Activated CD4-positive, alpha-beta T cell treated with anti-CD3 and anti-CD28 coated beads for 36 hours (primary cell): ENCODE measurements at regions of chr11 and their contacts with region 1.

Region 1: DNA sequence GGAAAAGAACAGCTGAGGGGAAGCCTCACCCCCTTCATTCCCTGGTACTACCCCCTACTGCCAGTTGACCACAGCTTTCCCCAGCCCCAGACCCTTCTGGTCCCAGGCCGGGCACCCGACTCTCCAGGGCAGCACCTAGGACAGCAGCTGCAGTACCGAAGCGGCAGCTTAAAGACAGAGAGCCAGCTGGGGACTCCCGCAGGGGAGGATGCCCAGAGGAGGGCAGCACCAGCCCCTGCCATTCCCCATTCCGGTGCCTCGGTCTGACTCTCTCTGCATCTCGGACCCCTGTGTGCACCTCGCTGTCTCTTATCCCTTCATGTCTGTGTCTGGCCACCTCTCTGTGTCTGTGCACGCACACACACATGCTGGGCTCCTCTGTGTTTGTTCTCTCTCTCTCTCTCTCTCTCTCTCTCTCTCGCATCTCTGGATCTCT is 9.4 kb downstream of the IGSF9B start:
- DNase-seq: peak; percentile 87
- ATAC-seq: peak; percentile 27
- H3K4me3 Mint-ChIP-seq: peak overlapping the region; percentile 65
- H3K27ac Mint-ChIP-seq: peak overlapping the region; percentile 85
- H3K4me1 Mint-ChIP-seq: peaks cover 75% of the 10 kb centered on the region
- H3K27me3 Mint-ChIP-seq: no peaks in the 10 kb centered on the region

Region 2: GRCh38 chr11:133726542-133726941 is 220.8 kb before region 1 on chr11:
- CTCF ChIA-PET with region 1: no interaction called
- POLR2A ChIA-PET with region 1: no interaction called
- intact Hi-C with region 1: no loop called
- DNase-seq: no peak
- ATAC-seq: no peak
- H3K4me3 Mint-ChIP-seq: no peak overlapping the region
- H3K27ac Mint-ChIP-seq: no peak overlapping the region
- H3K4me1 Mint-ChIP-seq: no peaks in the 10 kb centered on the region
- H3K27me3 Mint-ChIP-seq: no peaks in the 10 kb centered on the region

Region 3: GRCh38 chr11:133977067-133977677 is 29.8 kb after region 1 on chr11:
- CTCF ChIA-PET with region 1: no interaction called
- POLR2A ChIA-PET with region 1: no interaction called
- intact Hi-C with region 1: no loop called
- DNase-seq: no peak
- ATAC-seq: peak; percentile 65
- H3K4me3 Mint-ChIP-seq: no peak overlapping the region
- H3K27ac Mint-ChIP-seq: no peak overlapping the region
- H3K4me1 Mint-ChIP-seq: no peaks in the 10 kb centered on the region
- H3K27me3 Mint-ChIP-seq: peaks cover 8% of the 10 kb centered on the region

Region 4: DNA sequence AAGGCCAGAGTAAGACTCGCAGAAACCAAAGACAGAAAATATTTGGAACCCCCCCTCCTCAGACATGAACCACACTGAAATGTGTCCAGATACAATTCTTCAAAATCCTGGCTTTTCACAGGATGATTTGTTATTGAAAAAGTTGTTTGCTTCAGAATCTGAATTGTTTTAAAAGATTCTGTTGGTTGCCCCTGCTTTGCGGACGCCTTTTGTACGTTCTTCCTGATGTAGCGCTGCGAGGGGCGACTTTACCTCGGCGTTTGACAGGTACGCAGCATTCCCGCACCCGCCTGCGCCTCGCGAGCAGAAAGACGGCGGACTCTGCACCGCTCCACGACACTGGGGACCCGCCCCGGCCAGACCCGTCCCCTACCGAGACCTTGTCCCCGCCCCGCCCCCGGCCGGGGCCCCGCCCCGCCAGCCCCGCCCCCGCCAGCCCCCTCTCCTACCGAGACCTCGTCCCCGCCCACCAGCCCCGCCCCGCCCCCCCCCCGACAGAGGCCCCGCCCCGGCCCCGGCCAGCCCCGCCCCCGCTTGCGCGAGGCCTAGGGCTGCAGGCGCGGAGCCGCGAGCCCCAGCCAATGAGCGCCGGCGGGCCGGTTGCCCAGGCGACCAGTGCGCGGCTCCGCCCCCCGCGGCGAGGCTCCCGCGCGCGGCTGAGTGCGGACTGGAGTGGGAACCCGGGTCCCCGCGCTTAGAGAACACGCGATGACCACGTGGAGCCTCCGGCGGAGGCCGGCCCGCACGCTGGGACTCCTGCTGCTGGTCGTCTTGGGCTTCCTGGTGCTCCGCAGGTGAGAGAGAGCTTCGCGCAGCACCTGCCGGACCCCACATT is 384.2 kb after region 1 on chr11 and contains the start of gene GLB1L2:
- CTCF ChIA-PET with region 1: no interaction called
- POLR2A ChIA-PET with region 1: no interaction called
- intact Hi-C with region 1: loop called in 1 of 2 experiments (anchors 5 kb)
- DNase-seq: peak; percentile 86
- ATAC-seq: peak; percentile 99
- H3K4me3 Mint-ChIP-seq: peak within 1 kb of the TSS; percentile 75
- H3K27ac Mint-ChIP-seq: peak within 1 kb of the TSS; percentile 64
- H3K4me1 Mint-ChIP-seq: peaks cover 12% of the 10 kb centered on the region
- H3K27me3 Mint-ChIP-seq: peaks cover 23% of the 10 kb centered on the region
- total RNA-seq, gene GLB1L2: 3.9 to 4.2 TPM